ENCODE measurements at regions of chr5 and their contacts with region 1.

Region 1: GRCh38 chr5:9156282-9156681 is 389.6 kb downstream of the SEMA5A start:
- DNase-seq: peak; percentile 83
- ATAC-seq: peak; percentile 86
- H3K4me3 ChIP-seq: no peak overlapping the region
- H3K27ac ChIP-seq: peak overlapping the region; percentile 1; the same call in 1 of the 2 replicates
- H3K4me1 ChIP-seq: peaks cover 10% of the 10 kb centered on the region
- H3K27me3 ChIP-seq: no peaks in the 10 kb centered on the region
- CTCF ChIP-seq: peak; percentile 73
- POLR2A ChIP-seq: no peak
- RAD21 ChIP-seq: peak; percentile 86

Region 2: DNA sequence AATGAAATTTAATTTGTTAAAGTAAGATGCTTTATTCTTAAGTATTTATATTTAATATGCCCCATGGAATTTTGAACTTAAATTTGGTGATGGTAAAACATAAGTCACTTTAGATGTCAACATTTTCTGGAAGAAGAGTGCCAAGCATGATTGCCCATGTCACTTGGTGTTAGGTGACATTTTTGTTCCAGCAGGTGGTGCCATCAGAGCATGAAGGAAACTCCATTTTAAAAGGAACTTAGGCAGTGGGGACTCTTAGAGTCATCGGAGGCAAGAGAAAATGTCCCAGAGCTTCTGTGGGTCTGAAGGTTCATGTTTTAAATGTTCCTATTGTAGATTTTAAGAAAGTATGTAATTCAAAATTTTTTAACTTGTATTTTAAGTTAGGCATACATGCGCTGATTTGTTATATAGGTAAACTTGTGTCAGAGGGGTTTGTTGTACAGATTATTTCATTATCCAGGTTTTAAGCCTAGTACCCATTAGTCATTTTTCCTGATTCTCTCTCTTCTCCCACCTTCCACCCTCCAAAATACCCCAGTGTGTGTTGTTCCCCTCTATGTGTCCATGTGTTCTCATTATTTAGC is 399.7 kb before region 1 on chr5:
- CTCF ChIA-PET with region 1: no interaction called
- POLR2A ChIA-PET with region 1: no interaction called
- dilution Hi-C with region 1: no loop called
- in situ Hi-C with region 1: no loop called
- intact Hi-C with region 1: loop called (anchors 5 kb)
- DNase-seq: peak; percentile 60
- ATAC-seq: peak; percentile 63; the same call in 1 of the 2 replicates
- H3K4me3 ChIP-seq: no peak overlapping the region
- H3K27ac ChIP-seq: no peak overlapping the region
- H3K4me1 ChIP-seq: peaks cover 2% of the 10 kb centered on the region; the same call in 1 of the 2 replicates
- H3K27me3 ChIP-seq: no peaks in the 10 kb centered on the region
- CTCF ChIP-seq: peak; percentile 59
- POLR2A ChIP-seq: no peak
- RAD21 ChIP-seq: peak; percentile 81

Region 3: GRCh38 chr5:9456435-9457042 is 300.3 kb after region 1 on chr5:
- CTCF ChIA-PET with region 1: no interaction called
- POLR2A ChIA-PET with region 1: no interaction called
- dilution Hi-C with region 1: no loop called
- in situ Hi-C with region 1: no loop called
- intact Hi-C with region 1: no loop called
- DNase-seq: peak; percentile 97
- ATAC-seq: peak; percentile 92
- H3K4me3 ChIP-seq: no peak overlapping the region
- H3K27ac ChIP-seq: no peak overlapping the region
- H3K4me1 ChIP-seq: peaks cover 4% of the 10 kb centered on the region
- H3K27me3 ChIP-seq: peaks cover 2% of the 10 kb centered on the region; the same call in 1 of the 2 replicates
- CTCF ChIP-seq: no peak
- POLR2A ChIP-seq: no peak
- RAD21 ChIP-seq: no peak

Measured in IMR-90 (cell line).